ENCODE measurements at regions of chr22 and their contacts with region 1.

Region 1: GRCh38 chr22:18001040-18001893 is 23.1 kb downstream of the MICAL3 start:
- DNase-seq: peak; percentile 96

Region 2: GRCh38 chr22:17724678-17725499 is 276.4 kb before region 1 on chr22:
- intact Hi-C with region 1: no loop called
- DNase-seq: no peak

Region 3: GRCh38 chr22:17910561-17911311 is 90.5 kb before region 1 on chr22:
- intact Hi-C with region 1: loop called (anchors 10 kb)
- DNase-seq: peak; percentile 92

Region 4: DNA sequence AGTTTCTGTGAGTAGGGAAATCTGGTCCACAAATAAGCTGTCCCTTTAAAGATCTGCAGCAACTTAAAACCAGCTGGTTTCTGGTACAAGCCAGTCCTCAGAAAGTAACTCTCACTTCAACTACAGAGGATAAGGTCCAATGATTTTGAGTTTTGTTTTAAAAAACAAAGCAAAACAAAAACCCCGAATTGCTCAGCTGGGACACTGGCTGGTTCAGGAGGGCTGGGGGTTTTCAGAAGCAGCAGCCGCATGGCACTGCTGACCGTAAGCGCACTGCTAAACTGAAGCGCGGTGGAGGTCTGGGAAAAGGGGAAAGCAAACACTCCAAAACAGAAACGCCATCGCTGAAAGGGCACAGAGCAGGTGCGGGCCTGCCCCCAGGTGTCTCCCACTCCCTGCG is 36.6 kb before region 1 on chr22:
- intact Hi-C with region 1: no loop called
- DNase-seq: no peak

Measured in posterior vena cava (tissue), 2 donors.